Activated CD8-positive, alpha-beta memory T cell treated with anti-CD3 and anti-CD28 coated beads, Interleukin-2, amount 10 ng/mL, durations not matched to agents 7 days and 5 days (primary cell): ENCODE measurements at regions of chr11 and their contacts with region 1.

Region 1: GRCh38 chr11:65937766-65938165 is 7.5 kb upstream of the TSGA10IP start:
- DNase-seq: no peak
- ATAC-seq: no peak
- H3K4me3 Mint-ChIP-seq: no peak overlapping the region
- H3K27ac Mint-ChIP-seq: no peak overlapping the region
- H3K4me1 Mint-ChIP-seq: peaks cover 5% of the 10 kb centered on the region
- H3K27me3 Mint-ChIP-seq: peaks cover 8% of the 10 kb centered on the region

Region 2: DNA sequence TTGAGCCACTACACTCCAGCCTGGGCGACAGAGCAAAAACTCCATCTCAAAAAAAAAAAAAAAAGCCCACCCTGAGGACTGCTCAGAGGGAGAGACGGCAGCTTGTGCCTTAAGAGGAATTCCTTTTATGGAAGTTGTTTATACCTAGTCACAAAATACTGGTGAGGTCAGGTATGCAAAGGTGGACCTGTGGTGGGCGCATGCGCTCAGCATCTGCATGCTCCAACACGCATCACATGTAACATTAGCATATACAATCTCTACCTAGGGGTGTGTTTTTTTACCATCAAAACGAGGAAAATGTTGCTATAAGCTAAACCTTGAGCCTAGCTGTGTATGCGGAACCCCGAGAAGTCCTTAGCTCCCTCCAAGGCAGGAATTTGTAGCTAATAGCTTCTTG is 17.0 kb after region 1 on chr11:
- CTCF ChIA-PET with region 1: interaction called, 10 read pairs
- DNase-seq: no peak
- ATAC-seq: no peak
- H3K4me3 Mint-ChIP-seq: no peak overlapping the region
- H3K27ac Mint-ChIP-seq: no peak overlapping the region
- H3K4me1 Mint-ChIP-seq: peaks cover 16% of the 10 kb centered on the region
- H3K27me3 Mint-ChIP-seq: peaks cover 4% of the 10 kb centered on the region